RWPE1 (cell line): ENCODE measurements at regions of chr7 and their contacts with region 1.

Region 1: GRCh38 chr7:107147464-107148393 is 21.1 kb upstream of the HBP1 start:
- DNase-seq: peak; percentile 39
- H3K27ac ChIP-seq: no peak overlapping the region
- CTCF ChIP-seq: peak; percentile 92

Region 2: DNA sequence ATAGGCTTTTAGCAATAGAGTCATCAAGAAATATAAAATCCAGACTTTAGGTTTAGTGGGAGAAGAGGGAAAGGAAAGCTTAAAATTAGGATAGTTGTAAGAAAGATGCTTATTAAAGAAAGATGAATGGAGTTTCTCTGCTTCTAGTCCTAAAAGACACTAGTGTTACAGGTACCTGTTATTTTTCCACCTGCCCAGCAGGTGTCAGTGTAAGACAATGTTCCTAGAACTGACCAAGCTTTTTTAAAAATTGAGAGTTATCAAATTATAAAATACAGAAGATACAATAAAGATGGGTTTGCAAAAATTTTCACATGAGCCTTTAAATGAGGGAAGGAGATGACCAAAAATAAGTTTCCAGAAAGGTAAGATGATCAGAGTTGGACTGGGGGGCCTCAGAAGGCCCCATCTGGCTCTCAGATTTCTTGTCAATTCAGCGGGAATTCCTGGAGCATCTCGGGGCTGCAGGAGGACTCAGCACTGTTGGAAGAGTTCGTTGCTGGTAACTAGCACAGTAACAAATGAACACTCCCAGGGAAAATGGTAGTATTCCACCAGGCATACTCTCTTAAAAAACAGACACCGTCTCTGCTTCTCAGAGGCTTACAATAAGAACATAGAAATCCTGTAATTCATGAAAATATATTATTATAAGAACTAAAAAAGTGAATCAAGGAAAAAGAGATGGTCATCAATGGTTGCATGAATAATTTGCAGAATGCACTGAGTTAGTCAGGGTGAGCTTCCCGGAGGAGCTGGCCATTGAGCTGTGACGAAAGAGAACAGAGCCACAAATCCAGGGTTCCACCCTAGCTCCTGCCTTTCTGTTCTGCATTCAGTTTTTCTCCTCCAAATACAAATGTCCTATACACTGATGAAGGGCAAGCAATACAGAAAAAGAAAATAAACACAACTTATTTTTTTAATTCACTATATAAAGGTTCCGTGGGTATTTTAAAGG is 354.4 kb before region 1 on chr7:
- CTCF ChIA-PET with region 1: interaction called, 10 read pairs
- POLR2A ChIA-PET with region 1: no interaction called
- DNase-seq: peak; percentile 59
- H3K27ac ChIP-seq: no peak overlapping the region
- CTCF ChIP-seq: peak; percentile 80